AG04450 (cell line): ENCODE measurements at regions of chr17 and their contacts with region 1.

Region 1: DNA sequence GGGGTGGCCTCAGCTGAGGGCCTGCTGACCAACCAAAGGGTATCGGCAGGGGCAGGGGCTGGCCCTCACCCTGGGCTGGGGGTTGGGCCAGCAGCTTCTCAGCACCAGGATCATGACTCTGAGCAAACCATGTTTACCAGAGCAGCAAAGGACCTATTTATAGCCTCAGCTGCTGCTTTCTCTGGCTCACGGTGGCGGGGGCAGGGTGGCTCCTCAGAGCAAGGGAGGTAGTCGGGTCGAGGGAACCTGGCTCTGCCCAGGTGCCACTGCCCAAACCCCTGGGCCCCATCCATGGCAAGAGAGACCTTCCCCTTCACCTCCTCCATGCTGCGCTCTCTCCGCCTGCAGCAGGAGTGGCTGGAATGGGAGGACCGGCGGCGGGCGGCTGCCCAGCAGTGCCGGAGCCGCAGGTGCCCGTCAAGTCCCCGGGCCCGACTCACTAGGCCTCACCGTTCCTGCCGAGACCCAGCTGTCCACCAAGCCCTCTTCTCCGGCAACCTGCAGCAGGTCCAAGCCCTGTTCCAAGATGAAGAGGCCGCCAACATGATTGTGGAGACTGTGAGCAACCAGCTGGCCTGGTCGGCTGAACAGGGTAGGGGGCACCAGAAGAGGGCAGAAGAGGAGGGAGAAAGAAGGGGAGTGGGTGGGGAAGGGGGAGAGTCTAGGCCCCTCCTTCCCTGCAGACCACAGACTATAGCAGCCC is at the start of gene ASB16:
- DNase-seq: no peak
- H3K4me3 ChIP-seq: peak within 1 kb of the TSS; percentile 29
- H3K27ac ChIP-seq: peak within 1 kb of the TSS; percentile 39
- H3K27me3 ChIP-seq: no peaks in the 10 kb centered on the region
- CTCF ChIP-seq: no peak
- polyA plus RNA-seq, gene ASB16: not detected in 2 replicates

Region 2: GRCh38 chr17:43946069-43946696 is 224.5 kb before region 1 on chr17:
- CTCF ChIA-PET with region 1: interaction called, 44 read pairs
- POLR2A ChIA-PET with region 1: no interaction called
- DNase-seq: no peak
- H3K4me3 ChIP-seq: no peak overlapping the region
- H3K27ac ChIP-seq: no peak overlapping the region
- H3K27me3 ChIP-seq: peaks cover 20% of the 10 kb centered on the region
- CTCF ChIP-seq: no peak

Region 3: GRCh38 chr17:44044067-44044466 is 126.6 kb before region 1 on chr17:
- CTCF ChIA-PET with region 1: interaction called, 16 read pairs
- POLR2A ChIA-PET with region 1: no interaction called
- DNase-seq: no peak
- H3K4me3 ChIP-seq: no peak overlapping the region
- H3K27ac ChIP-seq: peak overlapping the region; percentile 80
- H3K27me3 ChIP-seq: no peaks in the 10 kb centered on the region
- CTCF ChIP-seq: no peak

Region 4: DNA sequence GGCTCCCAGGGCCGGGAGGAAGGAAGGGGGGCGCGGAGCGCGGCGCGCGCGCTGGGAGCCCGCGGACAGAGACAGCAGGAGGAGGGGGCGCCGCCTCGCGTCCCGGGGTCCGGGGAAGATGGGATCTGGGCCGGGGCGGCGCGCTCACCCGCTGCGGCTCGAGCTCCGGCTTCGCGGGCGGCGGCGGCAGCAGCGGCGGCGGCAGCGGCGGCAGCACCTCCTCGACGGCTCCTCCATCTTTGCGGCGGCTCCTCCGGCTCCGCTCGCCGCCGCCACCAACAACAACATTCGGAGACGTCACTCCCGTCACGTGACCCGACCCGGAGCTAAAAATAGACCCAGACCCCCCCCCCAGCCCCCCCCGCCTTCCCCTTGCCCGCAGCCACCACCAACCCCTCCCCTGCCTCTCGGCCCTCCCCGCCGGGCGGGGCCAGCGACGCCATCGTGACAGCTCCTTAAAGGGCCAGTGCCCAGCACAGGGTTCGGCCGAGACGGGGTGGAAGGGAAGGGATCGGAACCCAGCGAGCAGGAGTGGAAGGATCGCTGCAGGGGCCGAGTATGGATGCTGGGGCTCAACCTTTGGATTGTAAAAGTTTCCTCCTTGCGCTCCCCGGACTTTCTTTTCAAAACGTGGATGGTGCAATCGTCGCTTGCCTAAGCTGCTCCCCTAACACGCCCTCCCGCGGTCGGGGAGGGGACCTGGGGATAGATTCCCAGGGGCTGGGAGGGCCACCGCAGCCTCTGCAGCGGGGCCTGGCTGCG is 47.1 kb before region 1 on chr17 and contains the start of gene HDAC5:
- CTCF ChIA-PET with region 1: interaction called, 11 read pairs
- POLR2A ChIA-PET with region 1: interaction called, 4 read pairs
- DNase-seq: peak; percentile 79
- H3K4me3 ChIP-seq: peak within 1 kb of the TSS; percentile 82
- H3K27ac ChIP-seq: peak within 1 kb of the TSS; percentile 98
- H3K27me3 ChIP-seq: no peaks in the 10 kb centered on the region
- CTCF ChIP-seq: peak; percentile 66
- polyA plus RNA-seq, gene HDAC5: 21.3 and 36.7 TPM in 2 replicates

Region 5: DNA sequence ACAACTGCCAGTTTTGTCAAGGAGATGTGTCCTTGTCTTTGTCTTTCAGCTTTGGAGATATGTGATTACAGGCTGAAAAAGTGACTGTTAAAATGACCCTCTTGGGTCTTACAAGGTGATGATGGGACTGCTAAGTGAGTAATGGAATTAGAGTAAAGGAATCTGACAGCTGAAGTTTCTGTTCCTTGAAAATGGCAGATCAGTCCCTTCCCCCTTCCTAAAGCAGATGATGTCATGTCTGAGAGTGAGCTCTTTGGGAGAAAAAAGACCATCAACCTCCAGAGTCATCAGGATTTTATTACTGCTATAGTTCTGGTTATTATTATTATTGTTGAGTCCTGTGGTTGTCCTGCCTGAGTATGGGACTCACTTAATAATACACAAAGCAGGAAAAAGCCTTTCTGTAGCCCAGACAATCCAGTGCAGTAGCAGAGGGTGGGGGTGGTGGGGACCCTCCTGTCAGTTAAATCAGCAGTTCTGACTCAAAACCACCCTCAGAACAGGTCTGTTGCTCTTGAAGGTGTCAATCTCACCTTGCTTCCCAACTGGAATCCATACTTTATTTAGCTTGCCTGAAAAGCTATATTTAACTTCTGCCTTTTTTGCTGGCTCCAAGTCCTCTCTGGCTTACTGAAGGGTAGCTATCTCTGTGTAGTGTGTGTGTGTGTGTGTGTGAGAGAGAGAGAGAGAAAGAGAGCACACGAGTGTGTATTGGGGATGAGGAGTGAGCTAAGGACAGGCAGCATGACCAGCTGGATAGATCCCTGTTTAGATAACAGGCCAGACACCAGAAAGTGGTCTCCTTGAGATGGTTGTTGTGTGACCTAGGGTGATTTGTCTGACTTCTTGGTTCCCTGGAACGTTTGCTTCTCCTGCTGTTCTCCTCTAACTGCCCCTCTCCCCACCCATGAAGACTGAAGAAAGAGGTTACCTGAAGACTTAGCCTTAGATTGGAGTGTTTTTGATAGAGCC is 24.0 kb before region 1 on chr17:
- CTCF ChIA-PET with region 1: interaction called, 12 read pairs
- POLR2A ChIA-PET with region 1: interaction called, 9 read pairs
- DNase-seq: no peak
- H3K4me3 ChIP-seq: no peak overlapping the region
- H3K27ac ChIP-seq: no peak overlapping the region
- H3K27me3 ChIP-seq: no peaks in the 10 kb centered on the region
- CTCF ChIP-seq: no peak

Region 6: GRCh38 chr17:44159519-44160210 is 11.0 kb before region 1 on chr17:
- CTCF ChIA-PET with region 1: interaction called, 26 read pairs
- POLR2A ChIA-PET with region 1: no interaction called
- DNase-seq: no peak
- H3K4me3 ChIP-seq: no peak overlapping the region
- H3K27ac ChIP-seq: no peak overlapping the region
- H3K27me3 ChIP-seq: no peaks in the 10 kb centered on the region
- CTCF ChIP-seq: no peak

Region 7: DNA sequence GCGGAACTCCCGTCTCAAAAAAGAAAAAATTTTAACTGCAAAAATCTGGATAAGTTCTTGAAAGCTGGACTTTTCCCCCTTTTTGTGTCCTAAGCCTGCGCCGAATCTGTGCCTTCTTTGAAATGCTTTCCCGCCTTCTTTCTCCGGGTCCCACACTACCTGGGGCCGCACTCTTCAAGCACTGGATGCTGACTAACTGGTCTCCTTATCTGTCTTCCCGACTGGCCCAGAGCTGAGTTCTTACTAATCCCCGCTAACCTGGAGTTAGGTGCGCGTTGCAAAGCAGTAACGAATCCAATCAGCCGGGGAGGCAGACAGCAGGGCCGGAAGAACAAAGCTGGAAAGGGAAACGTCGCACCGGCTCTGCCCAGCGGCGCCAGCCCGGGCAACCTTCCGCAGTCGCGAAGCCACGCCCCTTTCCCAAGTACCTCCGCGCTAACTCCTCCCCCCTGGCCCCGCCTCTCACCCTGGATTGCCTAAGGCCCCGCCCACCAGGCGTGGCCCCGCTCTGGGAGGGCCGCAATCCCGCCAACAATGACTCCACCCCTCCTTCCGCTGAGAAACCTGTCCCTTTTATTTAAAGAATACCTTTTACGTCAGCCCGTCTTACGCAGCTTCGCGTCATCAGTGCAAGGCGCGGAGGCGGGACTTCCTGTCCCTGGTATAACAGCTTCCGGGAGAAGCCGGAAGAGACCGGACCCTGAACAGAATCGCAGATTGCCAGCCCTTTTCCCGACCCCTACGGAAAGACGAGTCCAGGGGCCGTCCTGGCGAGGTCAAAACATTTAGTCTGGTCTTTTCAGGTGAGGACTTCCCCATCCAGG is 15.9 kb after region 1 on chr17 and contains the start of gene TMUB2:
- CTCF ChIA-PET with region 1: interaction called, 12 read pairs
- POLR2A ChIA-PET with region 1: interaction called, 6 read pairs
- DNase-seq: peak; percentile 99
- H3K4me3 ChIP-seq: peak within 1 kb of the TSS; percentile 97
- H3K27ac ChIP-seq: peak within 1 kb of the TSS; percentile 97
- H3K27me3 ChIP-seq: no peaks in the 10 kb centered on the region
- CTCF ChIP-seq: no peak
- polyA plus RNA-seq, gene TMUB2: 34.3 and 37.1 TPM in 2 replicates